T-cell (primary cell): ENCODE measurements at regions of chr14 and their contacts with region 1.

Region 1: DNA sequence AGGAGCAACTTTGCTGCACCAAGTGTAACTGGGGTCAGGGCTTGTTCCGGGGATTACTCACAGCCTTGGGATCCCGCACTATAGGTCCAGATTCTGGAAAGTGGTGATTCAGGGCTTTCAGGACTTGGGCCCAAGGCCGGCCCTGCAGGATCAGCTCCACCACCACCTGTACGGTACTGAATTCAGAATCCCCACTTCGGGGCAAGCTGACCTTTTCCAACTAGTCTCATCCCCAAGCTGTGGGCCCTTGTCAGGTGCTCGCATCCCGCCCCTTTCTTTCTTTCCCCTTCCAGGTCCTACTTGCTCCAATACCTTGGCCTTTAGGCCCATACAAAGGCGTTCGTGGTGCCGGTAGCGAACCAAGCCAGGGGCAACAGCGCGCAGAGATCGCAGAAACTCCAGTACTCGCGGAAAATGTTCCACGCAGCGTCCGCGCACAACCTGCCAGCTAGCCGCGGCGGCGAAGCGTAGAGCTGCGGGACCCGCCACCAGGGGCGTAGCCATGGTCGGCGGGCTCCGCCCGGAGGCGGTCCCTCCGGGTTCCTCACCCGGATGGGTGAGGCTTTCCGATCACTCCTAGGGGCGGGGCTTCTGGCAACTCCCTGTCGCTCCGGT is 487 bp downstream of the TINF2 start:
- DNase-seq: peak in 34 of 35 experiments; percentile 85 to 96 (median 92)
- ATAC-seq: peak; percentile 84 to 90 (median 86)
- H3K4me3 ChIP-seq: peak overlapping the region; percentile 81 to 96
- H3K4me3 Mint-ChIP-seq: peak overlapping the region; percentile 83 to 98 (median 98)
- H3K27ac ChIP-seq: peak overlapping the region; percentile 97
- H3K27ac Mint-ChIP-seq: peak overlapping the region; percentile 100
- H3K4me1 ChIP-seq: peaks cover 26 to 56% of the 10 kb centered on the region in 2 experiments
- H3K4me1 Mint-ChIP-seq: peaks cover 66 to 73% (median 69%) of the 10 kb centered on the region in 3 donors
- H3K27me3 ChIP-seq: no peaks in the 10 kb centered on the region
- H3K27me3 Mint-ChIP-seq: no peaks in the 10 kb centered on the region

Region 2: GRCh38 chr14:23910101-23910875 is 331.6 kb before region 1 on chr14:
- CTCF ChIA-PET with region 1: no interaction called
- POLR2A ChIA-PET with region 1: no interaction called
- DNase-seq: peak in 5 of 35 experiments; percentile 3 to 30 (median 4)
- ATAC-seq: no peak
- H3K4me3 ChIP-seq: no peak overlapping the region
- H3K4me3 Mint-ChIP-seq: no peak overlapping the region
- H3K27ac ChIP-seq: no peak overlapping the region
- H3K27ac Mint-ChIP-seq: no peak overlapping the region
- H3K4me1 ChIP-seq: no peaks in the 10 kb centered on the region
- H3K4me1 Mint-ChIP-seq: no peaks in the 10 kb centered on the region
- H3K27me3 ChIP-seq: peaks cover 0 to 21% of the 10 kb centered on the region in 2 experiments
- H3K27me3 Mint-ChIP-seq: peaks cover 20 to 24% of the 10 kb centered on the region in 2 donors

Region 3: GRCh38 chr14:24114536-24115450 is 127.1 kb before region 1 on chr14 and contains the starts of genes DCAF11 and NRL:
- CTCF ChIA-PET with region 1: interaction called in 1 of 2 experiments, 10 read pairs
- POLR2A ChIA-PET with region 1: interaction called in 1 of 2 experiments, 10 read pairs
- DNase-seq: peak; percentile 97 to 100 (median 99)
- ATAC-seq: peak; percentile 85 to 88 (median 87)
- H3K4me3 ChIP-seq: peak within 1 kb of the TSS; percentile 94 to 99
- H3K4me3 Mint-ChIP-seq: peak within 1 kb of the TSS; percentile 90 to 94 (median 93)
- H3K27ac ChIP-seq: peak within 1 kb of the TSS; percentile 99
- H3K27ac Mint-ChIP-seq: peak within 1 kb of the TSS; percentile 98
- H3K4me1 ChIP-seq: peaks cover 12 to 31% of the 10 kb centered on the region in 2 experiments
- H3K4me1 Mint-ChIP-seq: peaks cover 30 to 42% (median 32%) of the 10 kb centered on the region in 3 donors
- H3K27me3 ChIP-seq: no peaks in the 10 kb centered on the region
- H3K27me3 Mint-ChIP-seq: no peaks in the 10 kb centered on the region
- total RNA-seq, gene DCAF11: 78.5 to 94.1 (median 89.6) TPM
- total RNA-seq, gene NRL: 1.9 to 3.7 (median 3.4) TPM

Region 4: DNA sequence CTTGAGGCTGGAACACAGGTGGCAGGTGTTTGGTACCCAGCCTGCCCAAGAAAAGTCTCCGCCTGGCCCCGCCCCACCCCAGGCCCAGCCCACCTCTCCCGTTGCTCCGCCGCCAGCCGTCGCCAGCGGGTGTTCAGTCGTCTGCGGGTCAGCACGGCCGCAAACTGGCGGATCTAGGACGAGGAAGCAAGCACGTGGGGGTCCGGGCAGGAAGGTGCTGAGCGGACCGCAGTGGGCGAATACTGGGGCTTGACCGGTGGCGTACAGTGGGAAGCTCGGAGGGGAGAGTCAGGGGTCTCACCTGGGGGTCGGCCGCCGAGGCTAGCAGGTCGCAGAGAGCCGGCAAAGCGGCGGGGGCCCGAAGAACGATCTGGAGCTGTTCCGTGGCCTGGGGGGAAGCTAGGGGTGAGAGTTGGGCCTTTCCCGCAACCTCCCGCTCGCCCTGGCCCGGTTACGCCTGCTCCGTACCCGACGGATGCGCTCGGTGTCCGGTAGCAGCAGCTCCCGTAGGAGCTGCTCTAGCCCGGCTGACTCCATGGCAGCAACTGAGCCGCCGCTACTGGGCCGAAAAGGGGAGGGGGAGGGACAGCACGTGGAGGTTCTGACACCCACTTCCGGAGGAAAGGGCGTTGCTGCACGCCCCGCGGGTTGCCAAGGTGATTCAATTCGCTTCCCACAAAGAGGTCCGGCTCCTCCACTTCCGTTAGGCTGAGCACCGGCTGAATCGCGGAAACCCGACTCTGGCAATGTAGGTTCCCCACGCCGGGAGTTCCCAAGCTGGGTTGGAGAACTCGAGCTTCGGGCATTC is 53.5 kb before region 1 on chr14 and contains the start of gene IPO4:
- CTCF ChIA-PET with region 1: interaction called in 1 of 2 experiments, 10 read pairs
- POLR2A ChIA-PET with region 1: no interaction called
- DNase-seq: peak; percentile 83 to 97 (median 94)
- ATAC-seq: peak; percentile 91 to 95 (median 94)
- H3K4me3 ChIP-seq: peak within 1 kb of the TSS; percentile 84 to 89
- H3K4me3 Mint-ChIP-seq: peak within 1 kb of the TSS; percentile 86 to 89 (median 89)
- H3K27ac ChIP-seq: peak within 1 kb of the TSS; percentile 70
- H3K27ac Mint-ChIP-seq: peak within 1 kb of the TSS; percentile 89 to 94
- H3K4me1 ChIP-seq: peaks cover 3 to 36% of the 10 kb centered on the region in 2 experiments
- H3K4me1 Mint-ChIP-seq: peaks cover 38 to 50% (median 40%) of the 10 kb centered on the region in 3 donors
- H3K27me3 ChIP-seq: no peaks in the 10 kb centered on the region
- H3K27me3 Mint-ChIP-seq: no peaks in the 10 kb centered on the region
- total RNA-seq, gene IPO4: 34.4 to 53.4 (median 39.6) TPM

Region 5: GRCh38 chr14:24271134-24271833 is 29.3 kb after region 1 on chr14 and contains the start of gene RABGGTA:
- CTCF ChIA-PET with region 1: interaction called, 3 to 30 read pairs
- POLR2A ChIA-PET with region 1: interaction called, 4 to 19 read pairs
- DNase-seq: peak; percentile 85 to 98 (median 96)
- ATAC-seq: peak; percentile 87 to 97 (median 95)
- H3K4me3 ChIP-seq: peak within 1 kb of the TSS; percentile 82 to 94
- H3K4me3 Mint-ChIP-seq: peak within 1 kb of the TSS; percentile 84 to 90 (median 90)
- H3K27ac ChIP-seq: peak within 1 kb of the TSS; percentile 96
- H3K27ac Mint-ChIP-seq: peak within 1 kb of the TSS; percentile 95 to 97
- H3K4me1 ChIP-seq: peaks cover 15 to 29% of the 10 kb centered on the region in 2 experiments
- H3K4me1 Mint-ChIP-seq: peaks cover 34 to 51% (median 37%) of the 10 kb centered on the region in 3 donors
- H3K27me3 ChIP-seq: no peaks in the 10 kb centered on the region
- H3K27me3 Mint-ChIP-seq: no peaks in the 10 kb centered on the region
- total RNA-seq, gene RABGGTA: 49.3 to 66.5 (median 62.4) TPM

Region 6: DNA sequence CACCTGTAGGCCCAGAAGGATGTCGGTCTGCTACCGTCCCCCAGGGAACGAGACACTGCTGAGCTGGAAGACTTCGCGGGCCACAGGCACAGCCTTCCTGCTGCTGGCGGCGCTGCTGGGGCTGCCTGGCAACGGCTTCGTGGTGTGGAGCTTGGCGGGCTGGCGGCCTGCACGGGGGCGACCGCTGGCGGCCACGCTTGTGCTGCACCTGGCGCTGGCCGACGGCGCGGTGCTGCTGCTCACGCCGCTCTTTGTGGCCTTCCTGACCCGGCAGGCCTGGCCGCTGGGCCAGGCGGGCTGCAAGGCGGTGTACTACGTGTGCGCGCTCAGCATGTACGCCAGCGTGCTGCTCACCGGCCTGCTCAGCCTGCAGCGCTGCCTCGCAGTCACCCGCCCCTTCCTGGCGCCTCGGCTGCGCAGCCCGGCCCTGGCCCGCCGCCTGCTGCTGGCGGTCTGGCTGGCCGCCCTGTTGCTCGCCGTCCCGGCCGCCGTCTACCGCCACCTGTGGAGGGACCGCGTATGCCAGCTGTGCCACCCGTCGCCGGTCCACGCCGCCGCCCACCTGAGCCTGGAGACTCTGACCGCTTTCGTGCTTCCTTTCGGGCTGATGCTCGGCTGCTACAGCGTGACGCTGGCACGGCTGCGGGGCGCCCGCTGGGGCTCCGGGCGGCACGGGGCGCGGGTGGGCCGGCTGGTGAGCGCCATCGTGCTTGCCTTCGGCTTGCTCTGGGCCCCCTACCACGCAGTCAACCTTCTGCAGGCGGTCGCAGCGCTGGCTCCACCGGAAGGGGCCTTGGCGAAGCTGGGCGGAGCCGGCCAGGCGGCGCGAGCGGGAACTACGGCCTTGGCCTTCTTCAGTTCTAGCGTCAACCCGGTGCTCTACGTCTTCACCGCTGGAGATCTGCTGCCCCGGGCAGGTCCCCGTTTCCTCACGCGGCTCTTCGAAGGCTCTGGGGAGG is 69.0 kb after region 1 on chr14 and contains the start of gene LTB4R:
- CTCF ChIA-PET with region 1: interaction called, 4 to 25 read pairs
- POLR2A ChIA-PET with region 1: interaction called in 1 of 2 experiments, 5 read pairs
- DNase-seq: peak; percentile 31 to 84 (median 59)
- ATAC-seq: peak; percentile 86 to 91 (median 88)
- H3K4me3 ChIP-seq: peak within 1 kb of the TSS; percentile 61 to 64
- H3K4me3 Mint-ChIP-seq: peak within 1 kb of the TSS; percentile 74 to 83 (median 77)
- H3K27ac ChIP-seq: peak within 1 kb of the TSS; percentile 77
- H3K27ac Mint-ChIP-seq: peak within 1 kb of the TSS; percentile 94
- H3K4me1 ChIP-seq: peaks cover 39 to 78% of the 10 kb centered on the region in 2 experiments
- H3K4me1 Mint-ChIP-seq: peaks cover 72 to 78% (median 77%) of the 10 kb centered on the region in 3 donors
- H3K27me3 ChIP-seq: no peaks in the 10 kb centered on the region
- H3K27me3 Mint-ChIP-seq: no peaks in the 10 kb centered on the region
- total RNA-seq, gene LTB4R: 17.0 to 29.0 (median 18.0) TPM

Region 7: GRCh38 chr14:24431569-24432258 is 189.8 kb after region 1 on chr14:
- CTCF ChIA-PET with region 1: interaction called in 1 of 2 experiments, 31 read pairs
- POLR2A ChIA-PET with region 1: interaction called in 1 of 2 experiments, 27 read pairs
- DNase-seq: peak; percentile 69 to 95 (median 83)
- ATAC-seq: peak; percentile 43 to 59 (median 48)
- H3K4me3 ChIP-seq: peak overlapping the region in 1 of 2 donors; percentile 86
- H3K4me3 Mint-ChIP-seq: peak overlapping the region; percentile 82 to 93 (median 88)
- H3K27ac ChIP-seq: peak overlapping the region; percentile 98
- H3K27ac Mint-ChIP-seq: peak overlapping the region; percentile 95 to 96
- H3K4me1 ChIP-seq: peaks cover 26 to 60% of the 10 kb centered on the region in 2 experiments
- H3K4me1 Mint-ChIP-seq: peaks cover 44 to 70% (median 57%) of the 10 kb centered on the region in 3 donors
- H3K27me3 ChIP-seq: no peaks in the 10 kb centered on the region
- H3K27me3 Mint-ChIP-seq: no peaks in the 10 kb centered on the region